GM10248 (cell line): ENCODE measurements at regions of chr7 and their contacts with region 1.

Region 1: DNA sequence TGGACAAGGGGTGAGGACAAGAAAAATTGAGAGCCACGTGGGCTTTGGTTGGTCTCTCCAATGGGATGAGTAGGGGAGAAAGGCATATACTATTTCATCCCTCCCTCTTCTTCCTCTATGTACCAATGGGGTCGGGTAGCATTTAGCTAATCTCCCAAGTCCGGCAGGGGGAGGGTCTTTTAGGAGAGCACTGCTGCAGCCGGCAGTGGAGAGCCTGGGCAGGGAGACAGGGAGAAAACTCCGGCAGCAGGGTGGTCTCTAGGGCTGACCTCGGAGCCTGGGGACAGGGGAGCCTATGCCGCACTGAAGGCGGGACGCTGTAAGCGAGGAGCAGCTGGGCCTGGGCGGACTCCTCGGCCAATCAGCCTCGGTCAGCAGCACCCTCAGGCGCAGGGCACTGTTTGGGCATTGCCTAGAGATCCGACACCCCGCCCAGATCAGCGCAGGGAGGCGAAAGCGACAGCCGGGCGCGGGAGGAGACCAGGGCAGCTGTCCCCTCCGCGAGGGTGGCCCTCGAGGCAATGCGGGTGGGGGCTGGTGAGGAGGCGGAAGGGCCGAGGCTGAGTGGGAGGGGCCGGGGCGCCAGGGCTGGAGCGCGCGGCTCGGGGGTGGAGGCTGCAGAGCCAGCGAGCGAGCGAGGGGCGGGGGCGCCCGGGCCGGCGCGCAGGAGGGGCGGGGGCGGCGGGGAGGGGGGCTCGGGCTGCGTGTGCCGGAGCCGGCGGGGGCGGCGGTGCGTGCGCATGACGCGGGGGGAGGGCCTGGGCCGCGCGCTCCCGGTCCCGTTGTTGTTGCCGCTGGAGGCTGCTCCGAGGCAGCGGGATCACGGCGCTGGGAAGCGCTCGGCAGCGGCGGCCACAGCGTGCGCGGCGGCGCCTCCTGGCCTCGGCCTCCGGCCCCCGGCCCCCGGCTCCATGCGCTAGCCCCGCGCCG is at the start of gene AGAP3:
- DNase-seq: peak; percentile 89
- CTCF ChIP-seq: no peak

Region 2: DNA sequence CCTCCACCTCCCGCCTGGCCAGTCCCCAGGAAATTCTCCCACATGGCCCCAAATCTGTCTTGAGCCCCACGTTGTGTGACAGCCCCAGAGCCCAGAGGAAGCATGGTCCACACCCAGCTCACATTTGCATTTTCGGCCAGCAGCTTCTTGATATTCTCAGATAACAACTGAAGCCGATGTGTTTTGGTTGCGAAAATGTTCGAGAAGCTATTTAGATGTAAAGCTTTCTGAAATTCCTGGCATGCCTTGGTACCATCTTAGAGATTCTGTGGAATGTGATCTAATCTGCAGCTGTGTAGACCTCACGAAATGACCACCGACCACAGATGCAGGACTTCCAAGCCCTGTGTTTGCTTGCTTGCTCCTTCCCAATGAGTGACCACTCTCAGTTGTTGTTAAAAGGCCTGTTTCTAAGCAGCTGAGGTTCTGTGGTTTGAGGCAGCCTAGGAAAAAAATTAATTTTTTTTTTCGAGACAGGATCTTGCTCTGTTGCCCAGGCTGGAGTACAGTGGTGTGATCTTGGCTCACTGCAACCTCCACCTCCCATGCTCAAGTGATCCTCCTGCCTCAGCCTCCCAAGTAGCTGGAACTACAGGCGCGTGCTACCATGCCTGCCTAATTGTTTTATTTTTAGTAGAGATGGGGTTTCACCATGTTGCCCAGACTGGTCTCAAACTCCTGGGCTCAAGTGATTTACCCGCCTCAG is 17.7 kb before region 1 on chr7:
- CTCF ChIA-PET with region 1: no interaction called
- POLR2A ChIA-PET with region 1: no interaction called
- DNase-seq: no peak
- CTCF ChIP-seq: no peak

Region 3: DNA sequence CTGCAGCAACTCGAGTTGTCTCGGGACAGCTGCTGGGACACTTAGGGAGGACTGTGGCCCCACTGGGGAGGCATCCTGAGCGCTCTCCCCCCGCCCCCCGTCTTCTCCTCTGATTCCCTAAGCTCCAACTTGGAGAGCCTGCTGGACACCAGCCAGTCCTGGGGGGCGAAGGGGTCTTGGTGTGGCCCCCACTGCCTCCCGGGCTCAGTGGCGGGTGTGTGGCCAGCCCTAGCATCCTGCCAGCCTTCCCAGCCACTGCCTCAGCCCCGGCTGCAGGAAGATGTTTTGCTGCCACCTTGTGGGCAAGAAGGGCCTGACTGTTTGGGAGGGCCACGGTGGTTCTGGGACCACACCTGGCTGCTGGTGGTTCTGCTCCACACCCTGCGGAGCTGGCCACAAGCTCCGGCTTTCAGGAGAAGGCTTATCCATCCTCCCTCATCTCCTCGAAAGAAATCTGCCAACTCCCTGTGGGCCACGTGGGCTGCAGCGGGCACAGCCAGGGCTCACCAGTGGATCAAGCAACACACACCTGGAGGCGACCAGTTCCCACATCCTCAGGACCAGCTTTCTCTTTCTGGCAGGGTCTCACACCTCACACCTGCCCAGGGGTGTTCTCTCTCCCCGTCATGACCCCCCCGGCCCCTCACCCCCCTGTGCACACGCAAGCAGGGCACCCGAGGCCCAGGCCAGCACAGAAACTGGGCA is 25.1 kb after region 1 on chr7:
- CTCF ChIA-PET with region 1: interaction called, 149 read pairs
- POLR2A ChIA-PET with region 1: no interaction called
- DNase-seq: peak; percentile 92
- CTCF ChIP-seq: peak; percentile 94